Ovary (tissue), 10 donors: ENCODE measurements at regions of chr2 and their contacts with region 1.

Region 1: DNA sequence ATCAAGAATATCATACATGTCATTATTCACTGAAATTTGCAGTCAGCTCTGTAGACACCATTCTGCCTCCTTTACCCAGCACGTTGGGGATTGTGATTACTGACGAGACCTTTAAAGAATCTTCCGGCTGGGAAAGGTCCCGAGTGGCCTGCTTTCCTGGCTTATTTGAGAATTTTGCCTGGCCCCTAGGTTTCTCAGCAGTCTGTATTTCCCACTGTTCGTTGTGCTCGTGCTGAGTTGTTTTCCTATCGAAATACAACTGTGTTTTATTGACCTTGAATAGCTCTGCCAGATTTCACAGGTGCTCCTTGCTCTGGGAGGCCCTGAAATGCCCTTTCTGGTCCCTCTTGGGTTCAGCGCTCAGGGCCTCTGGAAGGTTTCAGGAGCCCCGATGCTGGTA is 94.9 kb downstream of the AGAP1 start:
- DNase-seq: peak; percentile 47 to 64 (median 59)
- H3K4me3 ChIP-seq: no peak overlapping the region
- H3K27ac ChIP-seq: peak overlapping the region in 1 of 2 donors; percentile 36
- H3K4me1 ChIP-seq: peaks cover 3% of the 10 kb centered on the region
- H3K27me3 ChIP-seq: no peaks in the 10 kb centered on the region
- CTCF ChIP-seq: no peak
- EP300 ChIP-seq: no peak
- POLR2A ChIP-seq: no peak

Region 2: DNA sequence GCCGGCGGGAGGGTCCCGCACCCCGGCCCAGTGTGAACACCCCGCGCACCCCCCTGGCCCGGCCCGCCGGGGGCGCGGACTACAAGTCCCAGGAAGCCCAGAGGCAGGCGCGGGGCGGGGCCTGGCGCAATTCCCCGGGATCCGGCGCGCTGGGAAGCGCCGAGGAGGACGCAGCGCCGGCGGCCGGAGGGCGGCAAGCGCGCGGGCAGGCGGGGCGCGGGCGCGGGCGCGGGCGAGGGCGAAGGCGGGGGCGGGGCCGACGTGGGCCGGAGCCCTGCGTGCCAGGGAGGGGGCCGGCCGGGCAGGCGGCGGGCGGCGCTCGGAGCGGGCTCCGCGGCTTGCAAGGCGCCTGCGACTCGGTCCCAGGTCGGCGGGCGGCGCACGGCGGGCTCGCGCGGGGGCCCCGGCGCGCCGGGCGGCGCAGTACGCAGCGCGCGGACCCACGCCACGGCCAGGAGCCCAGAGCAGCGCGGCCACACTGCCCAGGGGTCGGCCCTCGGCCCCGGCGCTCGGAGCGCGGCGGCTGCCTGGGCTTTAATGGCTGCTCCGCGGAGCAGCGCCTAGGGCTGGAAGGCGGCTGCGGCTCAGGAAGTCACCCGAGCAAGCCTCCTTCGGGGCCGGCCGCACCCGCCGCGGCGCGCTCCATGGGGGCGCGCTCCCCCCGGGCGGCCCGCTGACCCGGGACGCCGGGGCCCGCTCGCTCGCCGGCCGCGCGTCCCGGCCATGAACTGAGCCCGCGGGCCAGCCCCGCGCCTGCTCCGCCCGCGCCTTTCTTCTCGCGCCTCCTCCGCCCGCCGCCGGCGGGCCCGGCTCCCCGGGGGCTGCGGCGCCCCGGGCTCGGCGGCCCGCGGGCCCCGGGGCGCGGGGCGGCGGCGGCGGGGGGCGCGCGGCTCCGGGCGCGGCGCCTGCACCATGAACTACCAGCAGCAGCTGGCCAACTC is 94.7 kb before region 1 on chr2 and contains the start of gene AGAP1:
- intact Hi-C with region 1: loop called in 2 of 4 experiments (anchors 5 to 10 kb)
- DNase-seq: peak; percentile 87 to 94 (median 90)
- H3K4me3 ChIP-seq: peak within 1 kb of the TSS; percentile 62
- H3K27ac ChIP-seq: peak within 1 kb of the TSS; percentile 62 to 80
- H3K4me1 ChIP-seq: peaks cover 3% of the 10 kb centered on the region
- H3K27me3 ChIP-seq: no peaks in the 10 kb centered on the region
- CTCF ChIP-seq: peak in 1 of 3 donors; percentile 22
- EP300 ChIP-seq: no peak
- POLR2A ChIP-seq: no peak
- total RNA-seq, gene AGAP1: 12.4 to 32.2 (median 21.9) TPM

Region 3: DNA sequence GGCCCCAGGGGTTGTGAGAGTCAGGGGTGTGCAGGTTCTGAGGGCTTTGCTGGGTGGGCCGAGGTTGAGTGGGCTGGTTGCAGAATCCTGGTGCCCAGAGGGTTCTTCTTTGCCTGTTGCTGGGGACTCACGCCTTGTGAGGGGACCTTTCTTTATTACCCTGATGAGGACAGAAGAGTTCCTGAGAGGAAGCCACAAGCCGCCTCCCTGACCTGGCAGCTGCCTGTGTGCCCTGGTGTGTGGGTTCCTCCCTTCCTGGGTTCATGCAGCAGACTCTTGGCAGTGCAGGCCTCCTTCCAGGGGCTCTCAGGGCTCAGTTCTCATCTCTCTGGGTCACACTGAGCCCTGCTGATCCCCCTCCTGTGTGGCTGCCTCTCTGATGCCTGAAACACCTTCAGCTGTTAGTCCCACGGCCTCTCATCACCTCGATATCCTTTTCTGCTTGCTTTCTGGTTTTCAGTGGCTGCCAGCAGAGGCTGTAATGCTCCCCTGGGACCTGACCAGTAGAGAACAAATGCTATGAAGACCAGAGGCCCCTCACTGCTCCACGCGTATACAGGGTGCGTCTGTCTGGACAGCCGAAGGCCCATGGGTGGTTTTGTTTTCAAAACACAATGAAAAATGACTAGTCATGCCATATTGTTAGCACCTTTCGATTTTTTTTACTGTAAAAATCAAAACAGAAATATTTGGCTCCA is 96.4 kb after region 1 on chr2:
- intact Hi-C with region 1: no loop called
- DNase-seq: no peak
- H3K4me3 ChIP-seq: no peak overlapping the region
- H3K27ac ChIP-seq: no peak overlapping the region
- H3K4me1 ChIP-seq: peaks cover 1% of the 10 kb centered on the region
- H3K27me3 ChIP-seq: no peaks in the 10 kb centered on the region
- CTCF ChIP-seq: no peak
- EP300 ChIP-seq: no peak
- POLR2A ChIP-seq: no peak

Region 4: DNA sequence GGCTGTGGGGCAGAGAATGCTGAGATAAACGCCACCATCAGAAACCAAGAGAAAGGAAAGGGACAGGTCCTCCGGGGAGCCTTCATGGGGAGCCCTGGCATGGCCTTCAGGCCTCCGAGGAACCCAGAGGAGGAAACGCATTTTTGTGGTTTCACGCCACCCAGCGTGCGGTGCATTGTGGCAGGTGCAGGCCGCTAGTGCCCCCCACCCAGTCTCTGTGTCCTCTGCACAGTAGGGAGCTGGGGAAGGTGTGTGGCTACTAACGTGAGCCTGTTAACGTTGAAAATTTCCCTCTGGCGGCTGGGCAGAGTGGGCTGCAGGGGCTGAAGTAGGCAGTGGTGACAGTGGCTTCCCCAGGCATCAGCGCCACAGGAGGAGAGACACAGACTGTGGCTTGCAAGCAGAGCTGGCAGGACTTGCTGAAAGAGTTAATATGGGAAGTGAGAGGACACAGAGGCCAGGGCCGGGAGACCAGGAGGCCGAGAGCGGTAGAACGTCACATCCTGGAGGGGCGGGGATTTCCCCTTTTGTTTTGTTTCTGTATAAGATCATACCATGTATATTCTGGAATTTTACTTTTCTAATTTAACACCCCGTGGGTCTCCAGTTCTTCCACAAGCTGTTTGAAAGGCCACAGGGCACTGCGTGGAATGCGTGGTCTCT is 412.5 kb after region 1 on chr2:
- intact Hi-C with region 1: no loop called
- DNase-seq: no peak
- H3K4me3 ChIP-seq: no peak overlapping the region
- H3K27ac ChIP-seq: no peak overlapping the region
- H3K4me1 ChIP-seq: no peaks in the 10 kb centered on the region
- H3K27me3 ChIP-seq: no peaks in the 10 kb centered on the region
- CTCF ChIP-seq: no peak
- EP300 ChIP-seq: no peak
- POLR2A ChIP-seq: no peak